Mammary epithelial cell (primary cell): ENCODE measurements at regions of chr4 and their contacts with region 1.

Region 1: DNA sequence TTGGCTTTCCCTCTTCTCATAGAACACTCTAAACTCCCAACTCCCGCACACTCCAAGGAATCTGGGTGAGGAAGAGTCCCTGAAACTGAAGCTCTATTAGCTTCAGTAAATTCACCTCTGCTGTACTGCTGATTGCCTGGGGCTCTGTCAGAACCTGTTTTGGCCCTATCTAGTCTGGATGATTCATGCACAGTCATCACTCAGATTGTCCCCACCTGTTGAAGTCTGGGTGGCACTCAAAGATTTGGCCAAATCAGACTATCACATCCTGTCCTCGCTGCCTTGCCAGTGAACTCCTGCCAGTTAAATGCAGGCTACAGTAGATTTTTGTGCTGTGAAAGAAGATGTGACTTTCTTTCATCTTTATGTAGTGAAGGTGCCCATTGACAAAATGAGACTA is 63.5 kb upstream of the EMCN start:
- DNase-seq: peak; percentile 88
- H3K4me3 ChIP-seq: no peak overlapping the region
- H3K27ac ChIP-seq: no peak overlapping the region
- H3K4me1 ChIP-seq: peaks cover 13% of the 10 kb centered on the region
- H3K27me3 ChIP-seq: no peaks in the 10 kb centered on the region
- CTCF ChIP-seq: no peak

Region 2: GRCh38 chr4:100525686-100526085 is 55.6 kb before region 1 on chr4:
- CTCF ChIA-PET with region 1: no interaction called
- dilution Hi-C with region 1: no loop called
- in situ Hi-C with region 1: no loop called
- intact Hi-C with region 1: loop called (anchors 10 kb)
- DNase-seq: no peak
- H3K4me3 ChIP-seq: no peak overlapping the region
- H3K27ac ChIP-seq: no peak overlapping the region
- H3K4me1 ChIP-seq: no peaks in the 10 kb centered on the region
- H3K27me3 ChIP-seq: no peaks in the 10 kb centered on the region
- CTCF ChIP-seq: no peak

Region 3: GRCh38 chr4:100707786-100708185 is 126.5 kb after region 1 on chr4:
- CTCF ChIA-PET with region 1: no interaction called
- dilution Hi-C with region 1: no loop called
- in situ Hi-C with region 1: no loop called
- intact Hi-C with region 1: no loop called
- DNase-seq: no peak
- H3K4me3 ChIP-seq: no peak overlapping the region
- H3K27ac ChIP-seq: no peak overlapping the region
- H3K4me1 ChIP-seq: no peaks in the 10 kb centered on the region
- H3K27me3 ChIP-seq: no peaks in the 10 kb centered on the region
- CTCF ChIP-seq: no peak

Region 4: DNA sequence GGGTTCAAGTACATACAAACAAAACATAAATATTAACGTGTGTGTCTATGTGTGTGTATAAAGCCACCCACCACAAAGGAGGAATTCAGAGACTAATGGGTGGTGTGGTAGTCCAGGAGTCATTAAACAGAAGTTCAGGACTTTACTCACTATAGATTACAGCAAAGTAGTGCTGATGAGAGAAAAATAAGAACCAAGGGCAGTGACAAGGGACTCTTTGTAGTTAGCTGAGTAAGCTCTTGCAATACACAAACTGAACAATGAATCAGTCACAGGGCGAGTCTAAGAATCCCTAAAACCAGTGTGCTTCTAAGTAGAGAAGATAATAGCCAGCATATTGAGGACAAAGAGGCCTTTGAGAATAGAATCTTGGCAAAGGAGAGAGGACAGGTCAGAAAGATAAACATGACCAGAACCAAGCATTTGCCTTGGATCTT is 533.6 kb after region 1 on chr4:
- CTCF ChIA-PET with region 1: no interaction called
- dilution Hi-C with region 1: no loop called
- in situ Hi-C with region 1: no loop called
- intact Hi-C with region 1: no loop called
- DNase-seq: peak; percentile 96
- H3K4me3 ChIP-seq: no peak overlapping the region
- H3K27ac ChIP-seq: peak overlapping the region; percentile 71
- H3K4me1 ChIP-seq: peaks cover 8% of the 10 kb centered on the region
- H3K27me3 ChIP-seq: no peaks in the 10 kb centered on the region
- CTCF ChIP-seq: no peak